Right ventricle myocardium superior (tissue), 1 donor: ENCODE measurements at regions of chr4 and their contacts with region 1.

Region 1: GRCh38 chr4:124334119-124334518 is 378.4 kb downstream of the ANKRD50 start:
- DNase-seq: no peak
- ATAC-seq: peak; percentile 59

Region 2: GRCh38 chr4:125244848-125245450 is 910.8 kb after region 1 on chr4:
- intact Hi-C with region 1: loop called (anchors 5 kb)
- DNase-seq: no peak
- ATAC-seq: no peak

Region 3: DNA sequence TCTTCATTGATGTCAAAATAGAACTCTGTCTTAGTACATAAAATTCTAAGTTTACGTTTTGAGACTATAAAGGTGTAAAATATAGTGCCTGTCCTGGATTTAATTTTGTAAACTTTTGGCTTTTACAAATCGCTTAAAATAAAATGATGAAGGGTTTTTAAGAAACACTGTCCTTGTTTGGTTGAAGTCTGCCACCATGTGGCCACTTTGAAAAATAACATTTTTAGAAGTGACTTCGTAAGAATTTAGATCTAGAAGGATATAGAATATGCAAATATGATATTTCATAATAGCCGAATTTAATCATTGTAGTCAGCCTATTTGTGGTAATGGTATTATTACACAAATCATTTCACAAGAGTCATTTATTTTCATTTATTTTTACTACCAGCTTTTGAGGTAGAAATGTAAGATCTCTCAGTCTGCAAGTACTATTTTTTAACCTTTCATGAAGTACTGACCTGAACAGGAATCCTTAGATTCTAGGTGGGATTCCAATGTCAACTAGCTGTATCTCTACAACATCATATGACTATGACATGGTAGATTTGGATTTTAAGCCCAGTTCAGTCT is 949.7 kb after region 1 on chr4:
- intact Hi-C with region 1: loop called (anchors 10 kb)
- DNase-seq: no peak
- ATAC-seq: no peak